GM23248 (cell line): ENCODE measurements at regions of chr17 and their contacts with region 1.

Region 1: GRCh38 chr17:73429440-73430164 is 117.8 kb upstream of the CDC42EP4 start:
- DNase-seq: peak; percentile 91
- H3K4me3 ChIP-seq: no peak overlapping the region
- H3K27ac ChIP-seq: no peak overlapping the region
- H3K4me1 ChIP-seq: no peaks in the 10 kb centered on the region
- H3K27me3 ChIP-seq: 0 out of 2 replicates have a peak, but pooled peaks cover 9% of the 10 kb centered on the region

Region 2: DNA sequence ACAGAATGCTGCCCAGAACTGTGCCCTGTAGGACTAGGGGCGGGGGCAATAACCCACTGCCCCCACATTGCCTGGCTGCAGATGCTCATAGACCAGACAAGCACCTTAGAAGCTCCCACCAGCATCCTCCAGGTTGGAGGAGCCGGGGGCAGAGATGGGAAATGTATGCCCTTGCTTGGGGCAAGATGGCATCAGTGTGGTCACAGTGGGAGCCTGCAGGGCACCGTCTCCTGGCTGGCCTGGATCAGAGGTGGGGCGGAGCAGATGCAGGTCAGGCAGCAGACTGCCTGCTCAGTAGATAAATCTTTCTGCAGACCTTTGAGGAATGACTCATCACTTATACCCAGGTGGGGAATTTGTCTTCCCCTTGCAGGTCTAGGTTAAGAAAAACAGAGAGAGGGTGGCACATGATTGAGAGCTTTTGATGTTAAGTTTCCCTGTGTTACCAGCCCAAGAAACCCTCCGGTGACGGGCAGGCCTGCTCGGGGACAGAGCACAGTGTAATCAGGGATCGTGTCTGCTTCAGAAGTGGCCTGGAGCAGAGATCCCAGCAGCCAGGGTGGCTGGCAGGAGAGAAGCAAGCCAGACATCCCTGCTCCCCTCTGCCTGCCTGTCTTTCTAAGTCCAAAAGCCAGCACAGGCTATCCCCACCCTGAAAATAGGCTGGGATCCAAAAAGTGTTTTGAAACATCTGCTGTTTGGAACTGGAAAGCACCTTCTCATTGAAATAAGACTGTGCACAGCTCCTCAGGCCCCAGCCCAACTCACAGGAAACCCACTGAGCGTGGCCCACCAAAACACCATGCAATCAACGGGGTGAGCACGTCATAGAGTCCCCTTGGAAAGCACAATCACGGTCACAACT is 723.2 kb after region 1 on chr17:
- in situ Hi-C with region 1: loop called (anchors 25 kb)
- DNase-seq: peak; percentile 4
- H3K4me3 ChIP-seq: no peak overlapping the region
- H3K27ac ChIP-seq: no peak overlapping the region
- H3K4me1 ChIP-seq: no peaks in the 10 kb centered on the region
- H3K27me3 ChIP-seq: no peaks in the 10 kb centered on the region